Activated CD4-positive, alpha-beta T cell treated with anti-CD3 and anti-CD28 coated beads, Interleukin-2, amount 10 ng/mL, durations not matched to agents 24 days and 14 days (primary cell): ENCODE measurements at regions of chr12 and their contacts with region 1.

Region 1: GRCh38 chr12:24838531-24838950 is 110.4 kb downstream of the BCAT1 start:
- DNase-seq: peak; percentile 76
- H3K4me3 Mint-ChIP-seq: peak overlapping the region; percentile 63
- H3K27ac Mint-ChIP-seq: peak overlapping the region; percentile 87
- H3K4me1 Mint-ChIP-seq: peaks cover 40% of the 10 kb centered on the region
- H3K27me3 Mint-ChIP-seq: no peaks in the 10 kb centered on the region

Region 2: DNA sequence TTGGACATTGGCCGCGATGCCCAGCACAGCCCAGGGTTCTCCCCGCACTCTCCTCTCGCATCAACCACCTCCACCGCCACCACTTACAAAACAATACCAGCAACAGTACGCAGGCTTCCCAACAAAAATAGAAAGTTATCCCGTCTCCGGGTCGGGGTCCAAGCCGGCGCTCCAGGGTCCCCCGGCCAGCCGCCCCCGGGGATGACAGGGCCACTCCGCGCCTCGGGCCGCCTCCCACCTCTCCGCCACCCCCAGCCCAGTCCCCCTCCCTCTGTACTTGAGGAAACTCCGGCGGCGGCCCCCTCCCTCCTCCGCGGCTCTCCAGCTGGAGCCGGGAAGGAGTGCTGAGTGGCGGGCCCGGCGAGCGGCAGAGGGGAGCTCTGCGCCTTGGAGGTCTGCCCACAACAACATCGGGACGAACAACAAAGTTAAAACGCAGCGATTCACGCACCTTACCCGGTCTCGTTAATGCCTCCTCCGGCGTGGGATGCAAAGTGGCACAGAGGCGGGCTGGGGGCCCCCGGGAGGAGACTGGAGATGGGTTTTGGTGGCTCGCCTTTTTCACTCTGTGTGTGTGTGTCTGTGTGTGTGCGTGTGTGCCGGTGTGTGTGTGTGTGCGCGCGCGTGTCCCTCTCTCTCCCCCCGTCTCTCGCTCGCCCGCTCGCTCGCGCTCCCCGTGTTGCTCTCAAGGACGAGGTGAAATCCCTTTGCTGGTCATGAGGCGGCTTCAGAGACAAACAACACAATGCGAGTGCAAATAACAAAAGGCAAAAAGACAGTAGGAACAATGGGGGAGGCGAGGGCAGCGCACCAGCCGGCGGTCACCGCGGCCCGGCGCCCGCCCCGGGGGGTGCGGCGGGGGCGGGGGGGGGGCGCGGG is 276.4 kb before region 1 on chr12:
- intact Hi-C with region 1: loop called (anchors 5 kb)
- DNase-seq: peak; percentile 66
- H3K4me3 Mint-ChIP-seq: peak overlapping the region; percentile 93
- H3K27ac Mint-ChIP-seq: peak overlapping the region; percentile 82
- H3K4me1 Mint-ChIP-seq: peaks cover 18% of the 10 kb centered on the region
- H3K27me3 Mint-ChIP-seq: peaks cover 62% of the 10 kb centered on the region

Region 3: GRCh38 chr12:24754690-24755638 is 83.6 kb before region 1 on chr12:
- intact Hi-C with region 1: loop called (anchors 1 kb)
- DNase-seq: no peak
- H3K4me3 Mint-ChIP-seq: peak overlapping the region; percentile 15
- H3K27ac Mint-ChIP-seq: peak overlapping the region; percentile 85
- H3K4me1 Mint-ChIP-seq: peaks cover 19% of the 10 kb centered on the region
- H3K27me3 Mint-ChIP-seq: peaks cover 1% of the 10 kb centered on the region

Region 4: DNA sequence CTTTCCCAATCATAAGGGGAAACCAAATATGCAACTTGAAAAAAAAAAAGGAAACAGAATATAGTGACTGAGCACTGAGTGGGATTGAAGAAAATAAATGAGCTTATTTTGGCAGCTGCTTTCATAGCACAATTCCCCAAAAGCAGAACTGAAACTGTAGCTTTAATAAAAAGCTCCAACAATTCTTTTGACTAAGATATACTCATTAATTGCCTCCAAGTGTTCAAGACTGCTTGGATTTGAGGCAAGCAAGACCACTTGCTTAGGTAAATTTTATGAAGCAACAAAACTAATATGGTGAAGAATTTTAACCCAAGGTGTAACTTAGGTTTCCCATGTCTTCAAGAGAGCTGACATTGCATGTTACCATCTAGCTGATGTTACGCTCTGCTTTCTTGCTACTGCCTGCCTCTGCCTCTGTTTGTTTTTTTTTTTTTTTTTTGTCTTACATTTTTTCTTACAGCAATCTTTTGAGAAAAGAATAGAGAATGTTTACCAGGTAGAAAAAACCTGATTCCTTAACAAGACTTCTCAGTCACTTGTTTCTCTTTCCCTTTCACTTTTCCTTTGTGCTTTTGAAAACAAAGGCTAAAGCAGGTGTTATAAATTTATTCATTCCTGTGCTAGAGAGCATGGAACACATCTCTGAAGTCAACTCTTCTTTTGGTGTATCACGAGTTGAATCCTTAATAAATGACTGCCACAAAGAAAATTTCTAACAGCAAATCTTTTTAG is 24.0 kb before region 1 on chr12:
- intact Hi-C with region 1: loop called (anchors 1 kb)
- DNase-seq: no peak
- H3K4me3 Mint-ChIP-seq: peak overlapping the region; percentile 82
- H3K27ac Mint-ChIP-seq: peak overlapping the region; percentile 82
- H3K4me1 Mint-ChIP-seq: peaks cover 20% of the 10 kb centered on the region
- H3K27me3 Mint-ChIP-seq: no peaks in the 10 kb centered on the region

Region 5: GRCh38 chr12:24889411-24889810 is 50.9 kb after region 1 on chr12:
- intact Hi-C with region 1: no loop called
- DNase-seq: no peak
- H3K4me3 Mint-ChIP-seq: no peak overlapping the region
- H3K27ac Mint-ChIP-seq: no peak overlapping the region
- H3K4me1 Mint-ChIP-seq: peaks cover 5% of the 10 kb centered on the region
- H3K27me3 Mint-ChIP-seq: peaks cover 3% of the 10 kb centered on the region

Region 6: GRCh38 chr12:24921251-24922038 is 82.9 kb after region 1 on chr12:
- intact Hi-C with region 1: loop called (anchors 1 kb)
- DNase-seq: no peak
- H3K4me3 Mint-ChIP-seq: peak overlapping the region; percentile 49
- H3K27ac Mint-ChIP-seq: peak overlapping the region; percentile 81
- H3K4me1 Mint-ChIP-seq: peaks cover 36% of the 10 kb centered on the region
- H3K27me3 Mint-ChIP-seq: peaks cover 7% of the 10 kb centered on the region

Region 7: GRCh38 chr12:25052196-25052913 is 213.8 kb after region 1 on chr12:
- intact Hi-C with region 1: loop called (anchors 1 kb)
- DNase-seq: peak; percentile 87
- H3K4me3 Mint-ChIP-seq: peak overlapping the region; percentile 93
- H3K27ac Mint-ChIP-seq: peak overlapping the region; percentile 99
- H3K4me1 Mint-ChIP-seq: peaks cover 45% of the 10 kb centered on the region
- H3K27me3 Mint-ChIP-seq: peaks cover 3% of the 10 kb centered on the region

Region 8: GRCh38 chr12:25320123-25321006 is 481.8 kb after region 1 on chr12:
- intact Hi-C with region 1: loop called (anchors 1 kb)
- DNase-seq: peak; percentile 61
- H3K4me3 Mint-ChIP-seq: peak overlapping the region; percentile 43
- H3K27ac Mint-ChIP-seq: peak overlapping the region; percentile 80
- H3K4me1 Mint-ChIP-seq: peaks cover 47% of the 10 kb centered on the region
- H3K27me3 Mint-ChIP-seq: peaks cover 13% of the 10 kb centered on the region